Common myeloid progenitor, CD34-positive (primary cell): ENCODE measurements at regions of chr12 and their contacts with region 1.

Region 1: DNA sequence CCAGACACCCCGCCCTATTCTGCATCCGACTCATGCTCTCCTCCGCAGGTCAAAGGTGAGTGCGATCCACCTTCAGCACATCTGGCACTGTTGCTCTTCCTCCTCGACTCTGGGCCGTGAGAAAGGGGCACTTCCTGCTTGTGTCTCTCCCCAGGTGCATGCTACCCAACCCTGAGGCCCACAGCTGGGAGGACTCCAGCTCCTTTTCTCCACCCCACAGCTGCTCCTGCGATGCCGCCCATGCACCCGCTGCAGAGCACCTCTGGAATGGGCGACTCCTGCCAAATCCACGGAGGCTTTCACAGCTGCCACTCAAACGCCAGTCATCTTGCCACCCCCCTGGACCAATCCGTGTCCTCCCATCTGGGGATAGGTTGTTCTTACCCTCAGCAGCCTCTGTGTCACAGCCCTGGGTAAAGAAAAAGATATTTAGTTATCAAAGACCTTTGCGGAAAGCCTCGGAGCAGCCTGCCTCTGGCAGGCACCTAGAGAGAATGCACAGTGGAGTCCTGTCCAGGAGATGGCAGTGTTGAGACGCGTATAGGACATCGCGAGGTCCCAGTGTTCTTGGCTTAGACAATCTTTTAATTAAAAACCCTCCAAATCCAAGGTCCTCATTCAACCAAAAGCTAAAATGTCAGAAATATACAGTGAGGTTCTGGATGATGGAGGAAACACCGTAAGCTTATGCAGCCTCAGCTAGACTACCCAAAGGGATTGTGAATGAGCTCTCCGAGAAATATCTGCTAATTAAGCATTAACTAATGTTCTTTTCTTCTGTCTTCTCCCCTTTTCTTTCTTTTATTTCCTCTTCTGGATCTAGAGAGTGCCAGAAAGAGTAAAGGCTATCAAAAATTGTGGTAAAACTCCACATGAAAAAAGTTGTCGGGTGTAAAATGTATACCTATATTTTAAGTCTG is 54.3 kb downstream of the MYRFL start:
- DNase-seq: peak; percentile 65 to 84 (median 75)
- H3K4me3 ChIP-seq: peak overlapping the region in 1 of 7 experiments; percentile 53
- H3K27ac ChIP-seq: no peak overlapping the region
- H3K4me1 ChIP-seq: peaks cover 0 to 6% (median 2%) of the 10 kb centered on the region in 4 experiments
- H3K27me3 ChIP-seq: peaks cover 0 to 5% (median 0%) of the 10 kb centered on the region in 5 experiments

Region 2: DNA sequence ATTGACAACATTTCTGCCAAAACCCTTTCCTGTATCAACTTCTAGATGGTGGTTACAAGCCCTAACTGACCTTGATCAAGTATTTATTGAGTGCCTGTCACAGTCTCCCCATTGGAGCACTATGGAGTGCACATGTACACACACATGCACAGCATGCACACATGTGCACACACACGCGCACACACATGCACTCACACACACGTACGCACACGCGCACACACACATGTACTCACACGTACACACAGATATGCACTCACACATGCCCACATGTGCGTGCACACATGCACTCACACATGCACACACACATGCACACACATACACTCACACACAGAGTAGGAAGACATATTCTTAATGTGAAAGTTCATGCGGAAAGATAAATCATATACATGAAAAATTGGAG is 10.6 kb before region 1 on chr12:
- CTCF ChIA-PET with region 1: interaction called, 16 read pairs
- POLR2A ChIA-PET with region 1: no interaction called
- DNase-seq: no peak
- H3K4me3 ChIP-seq: no peak overlapping the region
- H3K27ac ChIP-seq: no peak overlapping the region
- H3K4me1 ChIP-seq: no peaks in the 10 kb centered on the region
- H3K27me3 ChIP-seq: peaks cover 0 to 7% (median 2%) of the 10 kb centered on the region in 5 experiments

Region 3: GRCh38 chr12:70576346-70577282 is 697.3 kb after region 1 on chr12:
- CTCF ChIA-PET with region 1: interaction called, 39 read pairs
- POLR2A ChIA-PET with region 1: no interaction called
- DNase-seq: peak; percentile 61 to 68 (median 65)
- H3K4me3 ChIP-seq: no peak overlapping the region
- H3K27ac ChIP-seq: no peak overlapping the region
- H3K4me1 ChIP-seq: no peaks in the 10 kb centered on the region
- H3K27me3 ChIP-seq: no peaks in the 10 kb centered on the region

Region 4: DNA sequence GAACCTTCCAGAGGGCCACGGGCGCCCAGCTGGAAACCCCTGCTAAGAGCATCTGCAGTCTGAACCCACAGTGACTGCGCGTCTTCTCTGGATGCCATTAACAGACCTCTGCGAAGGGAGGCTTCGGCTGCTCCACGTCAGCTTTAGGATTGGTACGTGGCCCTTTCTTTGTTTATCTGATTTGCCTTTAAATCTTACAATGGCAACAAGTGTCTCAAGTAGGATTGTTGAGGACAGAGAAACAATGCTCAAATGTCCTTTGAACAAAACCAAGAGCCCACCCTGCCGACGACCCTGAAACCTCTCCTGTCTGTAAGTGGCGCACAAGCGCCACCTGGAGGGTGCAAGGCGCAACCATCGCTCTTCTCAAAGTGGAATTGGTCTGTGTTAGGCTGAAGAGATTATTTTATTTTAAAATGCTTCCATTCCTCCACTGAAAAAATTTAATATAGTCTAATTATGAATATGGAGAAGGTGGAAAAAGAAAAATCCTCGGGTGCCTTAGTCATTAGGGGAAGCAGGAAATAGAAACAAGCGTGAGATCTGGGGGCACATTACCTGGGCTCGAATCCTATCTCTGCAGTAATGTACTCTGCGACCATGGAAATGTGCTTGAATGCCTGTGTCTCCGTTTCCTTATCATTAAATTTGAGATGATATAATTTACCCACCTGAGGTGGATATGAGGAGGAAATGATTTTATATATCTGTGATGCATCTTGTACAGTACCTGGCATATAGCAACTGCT is 840.5 kb after region 1 on chr12:
- CTCF ChIA-PET with region 1: interaction called, 57 read pairs
- POLR2A ChIA-PET with region 1: no interaction called
- DNase-seq: peak; percentile 64 to 88 (median 85)
- H3K4me3 ChIP-seq: peak overlapping the region in 6 of 7 experiments; percentile 45 to 83 (median 64)
- H3K27ac ChIP-seq: no peak overlapping the region
- H3K4me1 ChIP-seq: peaks cover 0 to 33% (median 17%) of the 10 kb centered on the region in 4 experiments
- H3K27me3 ChIP-seq: peaks cover 0 to 6% (median 0%) of the 10 kb centered on the region in 5 experiments

Region 5: DNA sequence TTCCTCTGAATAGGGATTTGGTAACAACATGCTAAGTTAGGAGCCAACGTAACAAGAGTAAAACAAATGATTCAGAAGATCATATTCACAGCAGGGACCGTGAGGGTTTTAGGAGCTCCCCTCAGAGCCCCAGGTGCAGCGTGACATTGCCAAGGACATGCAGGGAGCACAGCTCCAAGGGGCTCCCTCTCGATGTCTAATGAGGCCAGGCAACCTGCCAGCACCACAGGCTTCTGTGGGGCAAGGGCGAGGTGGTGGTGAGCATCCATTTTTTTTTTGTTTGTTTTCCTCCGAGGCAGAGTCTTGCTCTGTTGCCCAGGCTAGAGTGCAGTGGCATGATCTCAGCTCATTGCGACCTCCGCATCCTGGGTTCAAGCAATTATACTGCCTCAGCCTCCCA is 853.0 kb after region 1 on chr12:
- CTCF ChIA-PET with region 1: interaction called, 57 read pairs
- POLR2A ChIA-PET with region 1: no interaction called
- DNase-seq: no peak
- H3K4me3 ChIP-seq: no peak overlapping the region
- H3K27ac ChIP-seq: no peak overlapping the region
- H3K4me1 ChIP-seq: no peaks in the 10 kb centered on the region
- H3K27me3 ChIP-seq: no peaks in the 10 kb centered on the region